Activated CD4-positive, alpha-beta T cell treated with anti-CD3 and anti-CD28 coated beads for 36 hours (primary cell): ENCODE measurements at regions of chr2 and their contacts with region 1.

Region 1: DNA sequence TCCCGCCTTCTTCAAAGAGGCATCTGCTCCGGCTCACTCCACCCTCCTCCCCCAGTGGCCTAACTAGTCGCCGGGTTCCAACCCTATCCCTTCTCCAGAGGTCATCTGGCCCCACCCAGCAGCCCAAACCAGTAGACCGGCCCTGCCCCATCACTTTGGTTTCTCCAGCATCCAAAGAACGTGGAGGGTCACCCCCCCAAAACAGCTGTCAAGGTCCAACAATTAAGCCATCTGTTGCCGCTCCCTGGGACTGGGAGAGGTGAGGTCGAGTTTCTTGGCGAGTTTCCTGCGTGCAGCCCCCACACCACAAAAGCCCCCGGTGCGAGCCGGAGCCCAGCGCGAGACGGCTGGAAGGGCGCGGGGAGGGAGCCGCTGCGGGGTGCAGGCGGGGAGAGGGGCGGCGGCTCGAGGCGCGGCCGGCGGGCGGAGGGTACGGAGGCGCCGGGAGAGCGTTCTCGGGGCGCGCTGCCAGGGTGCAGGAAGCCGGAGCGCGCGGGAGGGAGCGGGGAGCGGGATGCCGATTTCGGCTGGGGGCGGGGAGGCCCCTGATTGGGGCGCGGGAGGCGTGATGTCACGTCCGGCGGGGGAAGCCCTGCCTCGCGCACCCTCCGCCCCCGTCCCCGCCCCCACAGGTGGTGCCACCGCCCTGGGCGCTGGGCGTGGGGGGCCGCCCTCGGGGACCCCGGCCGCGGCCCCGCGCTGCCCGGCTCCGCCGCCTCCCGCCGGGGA is 571 bp upstream of the GPC1 start:
- DNase-seq: peak; percentile 91
- ATAC-seq: peak; percentile 64
- H3K4me3 Mint-ChIP-seq: peak overlapping the region; percentile 68
- H3K27ac Mint-ChIP-seq: peak overlapping the region; percentile 26
- H3K4me1 Mint-ChIP-seq: peaks cover 12% of the 10 kb centered on the region
- H3K27me3 Mint-ChIP-seq: peaks cover 15% of the 10 kb centered on the region

Region 2: DNA sequence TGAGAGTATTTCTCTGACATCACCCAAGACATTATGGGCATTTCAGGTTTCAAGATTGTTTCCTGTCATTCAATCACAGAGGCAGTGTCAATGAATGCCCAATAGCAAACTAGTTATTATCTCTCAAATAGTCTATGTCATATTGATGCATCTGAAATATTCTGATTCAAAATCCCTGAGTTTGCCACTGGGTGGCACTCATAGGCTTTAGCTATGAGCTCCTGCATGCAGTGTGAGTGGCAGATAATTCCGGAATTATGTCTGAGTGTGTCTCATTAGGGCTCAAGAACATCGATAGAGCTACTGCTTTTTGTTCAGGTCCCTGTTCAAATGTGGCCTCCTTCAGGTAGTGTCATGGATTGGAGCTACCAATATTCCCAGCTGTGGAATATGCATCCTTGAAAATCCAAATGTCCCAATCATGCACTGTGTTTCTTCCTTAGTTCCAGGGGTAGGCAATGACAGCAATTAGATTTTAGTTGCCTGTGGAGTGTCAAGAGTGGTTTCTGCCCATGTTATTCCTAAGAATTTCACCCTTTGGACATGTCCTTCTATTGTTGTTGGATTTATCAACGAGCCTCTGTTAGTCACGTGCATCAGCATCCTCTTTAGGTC is 373.8 kb before region 1 on chr2:
- CTCF ChIA-PET with region 1: interaction called, 5 read pairs
- POLR2A ChIA-PET with region 1: no interaction called
- intact Hi-C with region 1: loop called in 1 of 2 experiments (anchors 10 kb)
- DNase-seq: peak; percentile 67
- ATAC-seq: peak; percentile 72
- H3K4me3 Mint-ChIP-seq: no peak overlapping the region
- H3K27ac Mint-ChIP-seq: no peak overlapping the region
- H3K4me1 Mint-ChIP-seq: no peaks in the 10 kb centered on the region
- H3K27me3 Mint-ChIP-seq: peaks cover 17% of the 10 kb centered on the region

Region 3: DNA sequence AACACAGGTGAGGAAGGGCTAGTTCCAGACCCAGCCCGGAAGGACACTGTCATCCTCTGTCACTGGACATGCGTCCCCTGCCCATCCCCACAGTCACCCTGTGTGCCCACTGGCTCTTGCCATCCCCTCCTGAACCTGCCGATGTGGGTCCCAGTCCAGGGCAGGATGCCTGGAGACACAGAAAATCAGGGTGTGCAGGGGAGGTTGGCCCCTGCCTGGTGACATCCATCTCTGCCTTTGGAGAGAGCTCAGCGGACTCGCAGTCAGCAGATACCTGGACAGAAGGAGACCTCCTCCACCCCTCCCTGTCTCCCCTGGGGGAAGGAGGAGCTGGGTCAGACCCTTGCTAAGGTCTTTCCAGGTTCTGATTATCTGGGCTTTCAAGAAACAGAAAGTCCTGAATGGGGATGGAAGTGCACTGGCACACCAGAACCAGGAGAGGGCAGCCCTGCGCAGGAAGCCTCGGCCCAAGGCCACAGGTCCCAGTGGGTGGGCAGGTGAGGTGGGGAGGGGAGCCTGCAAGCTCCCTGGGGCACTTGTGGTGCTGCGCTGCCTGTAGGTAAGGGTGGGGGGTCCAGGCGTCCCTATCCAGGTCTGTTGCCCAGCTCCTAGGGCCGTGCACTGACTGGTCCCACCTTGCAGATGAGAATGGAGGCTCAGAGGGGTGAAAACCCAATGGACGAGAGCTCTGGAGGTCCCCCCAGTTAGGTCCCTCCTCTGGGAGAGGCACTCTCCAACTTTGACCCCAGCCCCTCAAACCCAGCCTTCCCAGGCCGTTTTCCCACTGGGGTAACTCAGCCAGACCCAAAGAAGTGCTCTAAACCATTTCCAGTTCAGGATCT is 284.7 kb before region 1 on chr2:
- CTCF ChIA-PET with region 1: interaction called, 4 read pairs
- POLR2A ChIA-PET with region 1: no interaction called
- intact Hi-C with region 1: loop called (anchors 1 kb)
- DNase-seq: peak; percentile 62
- ATAC-seq: peak; percentile 60
- H3K4me3 Mint-ChIP-seq: no peak overlapping the region
- H3K27ac Mint-ChIP-seq: no peak overlapping the region
- H3K4me1 Mint-ChIP-seq: no peaks in the 10 kb centered on the region
- H3K27me3 Mint-ChIP-seq: peaks cover 18% of the 10 kb centered on the region

Region 4: DNA sequence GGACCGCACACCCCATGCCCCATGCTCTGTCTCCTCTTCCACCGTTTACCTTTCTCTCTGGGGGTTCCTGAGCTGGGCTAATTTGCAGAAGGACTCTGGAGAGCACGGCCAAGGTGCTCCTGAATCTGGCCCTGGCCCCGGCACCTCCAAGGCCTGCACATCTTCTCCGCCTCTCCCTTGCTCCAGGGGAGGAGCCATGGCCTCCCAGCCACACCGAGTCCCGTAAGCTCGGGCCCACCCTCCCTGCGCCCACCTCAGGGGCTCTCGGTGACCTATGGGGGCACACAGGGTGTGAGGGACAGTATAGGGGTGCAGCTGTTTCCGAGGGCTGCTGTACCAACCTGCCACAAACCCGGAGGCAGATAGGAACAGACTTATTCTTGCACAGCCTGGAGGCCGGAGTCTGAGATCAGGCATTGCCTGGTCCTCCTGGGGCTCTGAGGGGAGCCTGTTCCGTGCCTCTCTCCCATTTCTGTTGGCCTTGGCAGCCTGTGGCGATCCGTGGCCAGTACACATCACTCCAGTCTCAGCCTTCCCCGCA is 126.7 kb before region 1 on chr2:
- CTCF ChIA-PET with region 1: no interaction called
- POLR2A ChIA-PET with region 1: no interaction called
- intact Hi-C with region 1: no loop called
- DNase-seq: no peak
- ATAC-seq: no peak
- H3K4me3 Mint-ChIP-seq: no peak overlapping the region
- H3K27ac Mint-ChIP-seq: no peak overlapping the region
- H3K4me1 Mint-ChIP-seq: no peaks in the 10 kb centered on the region
- H3K27me3 Mint-ChIP-seq: peaks cover 2% of the 10 kb centered on the region

Region 5: DNA sequence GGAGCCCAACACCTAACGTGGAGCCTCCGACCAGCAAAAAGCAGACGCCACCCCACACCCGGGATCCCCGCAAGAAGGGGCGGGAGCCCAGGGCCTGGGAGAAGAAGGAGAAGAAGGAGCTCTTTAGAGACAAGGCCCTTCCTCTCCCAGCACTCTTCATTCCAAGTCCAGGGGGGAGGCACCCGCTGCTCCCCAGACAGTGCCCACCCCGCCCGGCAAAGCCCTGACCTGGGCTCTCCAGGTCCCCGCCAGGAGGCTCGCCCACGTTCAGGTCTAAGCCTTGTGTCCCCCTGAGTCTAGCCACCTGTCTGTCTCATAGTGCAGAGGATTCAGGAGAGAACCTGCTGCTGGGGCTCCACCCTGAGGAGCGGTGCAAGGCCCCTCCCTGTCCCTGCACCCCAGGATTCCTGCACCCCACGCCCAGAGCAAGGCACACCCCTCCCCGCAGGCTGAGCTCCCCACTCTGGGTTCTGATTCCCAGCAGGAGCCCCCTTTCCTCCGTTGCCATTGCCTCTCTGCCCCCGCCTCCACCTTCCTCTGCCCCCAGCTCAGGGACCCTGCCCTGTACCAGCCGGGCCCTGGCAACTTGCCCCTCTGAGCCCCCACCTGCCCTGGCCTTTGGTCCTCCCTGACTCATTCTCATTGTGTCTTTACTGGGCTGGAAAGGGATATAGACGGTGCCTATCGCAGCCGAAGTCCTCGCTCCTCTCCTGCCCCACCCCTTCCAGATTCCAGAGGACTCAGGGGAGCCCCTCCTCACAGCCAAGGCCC is 32.9 kb before region 1 on chr2:
- CTCF ChIA-PET with region 1: no interaction called
- POLR2A ChIA-PET with region 1: no interaction called
- intact Hi-C with region 1: loop called in 1 of 2 experiments (anchors 2 kb)
- DNase-seq: no peak
- ATAC-seq: no peak
- H3K4me3 Mint-ChIP-seq: no peak overlapping the region
- H3K27ac Mint-ChIP-seq: peak overlapping the region; percentile 47
- H3K4me1 Mint-ChIP-seq: peaks cover 20% of the 10 kb centered on the region
- H3K27me3 Mint-ChIP-seq: no peaks in the 10 kb centered on the region

Region 6: GRCh38 chr2:240449764-240450531 is 15.1 kb after region 1 on chr2:
- CTCF ChIA-PET with region 1: no interaction called
- POLR2A ChIA-PET with region 1: no interaction called
- intact Hi-C with region 1: no loop called
- DNase-seq: no peak
- ATAC-seq: no peak
- H3K4me3 Mint-ChIP-seq: no peak overlapping the region
- H3K27ac Mint-ChIP-seq: no peak overlapping the region
- H3K4me1 Mint-ChIP-seq: peaks cover 4% of the 10 kb centered on the region
- H3K27me3 Mint-ChIP-seq: peaks cover 26% of the 10 kb centered on the region